ENCODE measurements at regions of chr6 and their contacts with region 1.

Region 1: GRCh38 chr6:30541515-30542403 is 14.5 kb downstream of the GNL1 start:
- DNase-seq: peak; percentile 83
- H3K4me3 Mint-ChIP-seq: peak overlapping the region; percentile 75
- H3K27ac Mint-ChIP-seq: peak overlapping the region; percentile 77
- H3K4me1 Mint-ChIP-seq: peaks cover 34% of the 10 kb centered on the region
- H3K27me3 Mint-ChIP-seq: no peaks in the 10 kb centered on the region

Region 2: DNA sequence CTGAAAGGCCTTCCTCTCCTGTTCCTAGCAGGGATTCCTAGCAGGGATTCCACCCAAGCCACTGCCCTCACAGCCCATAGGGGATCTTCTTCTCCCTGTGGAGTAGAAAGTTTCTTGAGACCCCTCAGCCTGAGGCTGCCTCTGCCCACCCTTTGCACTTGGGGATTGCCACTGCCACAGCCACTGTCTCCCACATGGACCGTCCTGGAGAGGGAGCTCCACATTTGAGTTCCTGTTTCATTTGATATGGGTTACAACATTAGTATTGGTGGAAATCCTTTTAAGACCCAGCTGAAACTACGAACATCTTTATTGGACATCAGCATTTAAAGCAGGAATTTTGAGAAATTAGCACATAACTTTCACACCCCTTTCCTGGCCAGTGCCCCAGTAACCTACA is 688.5 kb before region 1 on chr6:
- CTCF ChIA-PET with region 1: no interaction called
- POLR2A ChIA-PET with region 1: no interaction called
- DNase-seq: no peak
- H3K4me3 Mint-ChIP-seq: no peak overlapping the region
- H3K27ac Mint-ChIP-seq: no peak overlapping the region
- H3K4me1 Mint-ChIP-seq: peaks cover 24% of the 10 kb centered on the region
- H3K27me3 Mint-ChIP-seq: peaks cover 69% of the 10 kb centered on the region

Region 3: DNA sequence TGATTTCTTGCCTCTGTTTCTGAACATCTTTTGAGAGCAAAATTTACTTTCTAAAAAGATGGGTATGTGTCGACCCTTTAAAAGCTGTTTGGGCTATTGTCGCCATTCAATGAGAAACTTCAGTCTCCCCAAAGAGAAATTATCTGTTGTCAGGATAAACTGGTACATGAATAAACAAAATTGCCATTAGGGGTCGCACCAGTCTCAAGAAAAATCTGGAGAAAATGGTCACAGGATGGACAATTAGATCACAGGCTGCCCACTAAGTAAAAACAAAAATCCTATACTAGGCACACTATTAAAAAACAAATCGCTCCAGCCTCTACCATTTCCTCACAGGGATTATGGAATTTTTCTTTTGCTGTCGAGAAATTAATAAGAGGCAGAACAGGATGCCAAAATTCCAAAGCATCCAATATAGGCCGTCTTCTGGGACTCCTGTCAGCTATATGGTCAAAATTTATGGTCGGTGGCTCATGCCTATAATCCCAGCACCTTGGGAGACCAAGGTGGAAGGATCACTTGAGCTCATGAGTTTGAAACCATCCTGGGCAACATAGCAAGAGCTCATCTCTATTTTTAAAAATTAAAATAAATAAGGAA is 58.0 kb before region 1 on chr6:
- CTCF ChIA-PET with region 1: interaction called, 267 read pairs
- POLR2A ChIA-PET with region 1: interaction called, 45 read pairs
- DNase-seq: no peak
- H3K4me3 Mint-ChIP-seq: no peak overlapping the region
- H3K27ac Mint-ChIP-seq: no peak overlapping the region
- H3K4me1 Mint-ChIP-seq: peaks cover 35% of the 10 kb centered on the region
- H3K27me3 Mint-ChIP-seq: peaks cover 60% of the 10 kb centered on the region

Region 4: DNA sequence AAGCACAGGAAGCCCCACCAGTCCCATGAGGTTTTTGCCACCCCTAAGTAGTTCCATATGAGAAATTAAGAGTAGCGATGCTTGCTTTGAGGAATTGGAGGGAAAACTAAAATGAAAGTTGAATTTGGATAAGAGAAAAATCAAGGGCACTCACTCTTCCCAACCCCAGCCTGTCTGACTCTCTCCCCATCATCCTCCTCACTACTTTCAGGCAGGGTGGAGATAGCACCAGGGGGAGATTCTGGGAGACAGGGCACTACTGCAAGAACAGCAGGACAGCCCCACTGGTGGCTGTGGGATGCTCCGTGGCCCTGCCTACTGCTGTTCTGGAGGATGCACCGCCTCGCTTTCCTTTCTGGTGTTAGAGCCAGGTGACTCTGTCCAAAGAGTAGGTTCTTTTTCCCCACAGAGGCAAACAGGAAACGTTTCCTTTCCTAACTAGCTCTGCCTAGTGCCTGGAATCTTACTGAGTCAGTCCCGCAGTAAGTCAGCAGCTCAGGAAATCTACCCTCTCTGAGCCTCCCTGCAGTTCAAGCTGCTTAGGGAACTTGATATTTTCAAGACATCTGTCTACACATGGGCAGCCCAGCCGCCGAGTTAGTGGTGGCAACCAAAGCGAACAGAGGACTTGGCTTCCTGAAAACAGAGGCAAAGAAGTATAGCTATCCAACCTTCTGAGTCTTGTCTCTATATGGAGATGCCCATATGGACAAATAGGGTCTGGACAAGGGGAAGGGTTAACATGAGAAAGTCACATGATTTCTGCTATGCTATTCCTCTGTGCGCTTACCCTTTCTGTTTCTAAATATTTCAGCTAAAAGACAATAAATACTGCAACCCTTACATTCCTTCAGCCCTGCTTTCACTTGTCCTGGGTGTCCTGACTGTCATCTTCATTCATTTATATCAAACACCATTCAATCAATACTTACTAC is 41.1 kb before region 1 on chr6:
- CTCF ChIA-PET with region 1: interaction called, 29 read pairs
- POLR2A ChIA-PET with region 1: interaction called, 9 read pairs
- DNase-seq: no peak
- H3K4me3 Mint-ChIP-seq: peak overlapping the region; percentile 37
- H3K27ac Mint-ChIP-seq: peak overlapping the region; percentile 40
- H3K4me1 Mint-ChIP-seq: peaks cover 30% of the 10 kb centered on the region
- H3K27me3 Mint-ChIP-seq: no peaks in the 10 kb centered on the region

Region 5: GRCh38 chr6:30515932-30516753 is 25.6 kb before region 1 on chr6:
- CTCF ChIA-PET with region 1: interaction called, 12 read pairs
- POLR2A ChIA-PET with region 1: interaction called, 8 read pairs
- DNase-seq: peak; percentile 94
- H3K4me3 Mint-ChIP-seq: peak overlapping the region; percentile 66
- H3K27ac Mint-ChIP-seq: peak overlapping the region; percentile 96
- H3K4me1 Mint-ChIP-seq: peaks cover 43% of the 10 kb centered on the region
- H3K27me3 Mint-ChIP-seq: no peaks in the 10 kb centered on the region

Region 6: GRCh38 chr6:30565772-30566171 is 24.0 kb after region 1 on chr6:
- CTCF ChIA-PET with region 1: interaction called, 15 read pairs
- POLR2A ChIA-PET with region 1: interaction called, 13 read pairs
- DNase-seq: no peak
- H3K4me3 Mint-ChIP-seq: no peak overlapping the region
- H3K27ac Mint-ChIP-seq: no peak overlapping the region
- H3K4me1 Mint-ChIP-seq: peaks cover 28% of the 10 kb centered on the region
- H3K27me3 Mint-ChIP-seq: no peaks in the 10 kb centered on the region

Region 7: GRCh38 chr6:30590994-30591393 is 49.2 kb after region 1 on chr6:
- CTCF ChIA-PET with region 1: interaction called, 48 read pairs
- POLR2A ChIA-PET with region 1: interaction called, 27 read pairs
- DNase-seq: no peak
- H3K4me3 Mint-ChIP-seq: no peak overlapping the region
- H3K27ac Mint-ChIP-seq: no peak overlapping the region
- H3K4me1 Mint-ChIP-seq: peaks cover 3% of the 10 kb centered on the region
- H3K27me3 Mint-ChIP-seq: no peaks in the 10 kb centered on the region

Region 8: GRCh38 chr6:30730601-30731435 is 189.1 kb after region 1 on chr6:
- CTCF ChIA-PET with region 1: interaction called, 28 read pairs
- POLR2A ChIA-PET with region 1: interaction called, 7 read pairs
- DNase-seq: peak; percentile 90
- H3K4me3 Mint-ChIP-seq: peak overlapping the region; percentile 35
- H3K27ac Mint-ChIP-seq: peak overlapping the region; percentile 55
- H3K4me1 Mint-ChIP-seq: peaks cover 44% of the 10 kb centered on the region
- H3K27me3 Mint-ChIP-seq: no peaks in the 10 kb centered on the region

Region 9: GRCh38 chr6:30759575-30760239 is 217.9 kb after region 1 on chr6:
- CTCF ChIA-PET with region 1: no interaction called
- POLR2A ChIA-PET with region 1: no interaction called
- DNase-seq: no peak
- H3K4me3 Mint-ChIP-seq: no peak overlapping the region
- H3K27ac Mint-ChIP-seq: no peak overlapping the region
- H3K4me1 Mint-ChIP-seq: peaks cover 18% of the 10 kb centered on the region
- H3K27me3 Mint-ChIP-seq: peaks cover 10% of the 10 kb centered on the region